ENCODE measurements at regions of chr17 and their contacts with region 1.

Region 1: DNA sequence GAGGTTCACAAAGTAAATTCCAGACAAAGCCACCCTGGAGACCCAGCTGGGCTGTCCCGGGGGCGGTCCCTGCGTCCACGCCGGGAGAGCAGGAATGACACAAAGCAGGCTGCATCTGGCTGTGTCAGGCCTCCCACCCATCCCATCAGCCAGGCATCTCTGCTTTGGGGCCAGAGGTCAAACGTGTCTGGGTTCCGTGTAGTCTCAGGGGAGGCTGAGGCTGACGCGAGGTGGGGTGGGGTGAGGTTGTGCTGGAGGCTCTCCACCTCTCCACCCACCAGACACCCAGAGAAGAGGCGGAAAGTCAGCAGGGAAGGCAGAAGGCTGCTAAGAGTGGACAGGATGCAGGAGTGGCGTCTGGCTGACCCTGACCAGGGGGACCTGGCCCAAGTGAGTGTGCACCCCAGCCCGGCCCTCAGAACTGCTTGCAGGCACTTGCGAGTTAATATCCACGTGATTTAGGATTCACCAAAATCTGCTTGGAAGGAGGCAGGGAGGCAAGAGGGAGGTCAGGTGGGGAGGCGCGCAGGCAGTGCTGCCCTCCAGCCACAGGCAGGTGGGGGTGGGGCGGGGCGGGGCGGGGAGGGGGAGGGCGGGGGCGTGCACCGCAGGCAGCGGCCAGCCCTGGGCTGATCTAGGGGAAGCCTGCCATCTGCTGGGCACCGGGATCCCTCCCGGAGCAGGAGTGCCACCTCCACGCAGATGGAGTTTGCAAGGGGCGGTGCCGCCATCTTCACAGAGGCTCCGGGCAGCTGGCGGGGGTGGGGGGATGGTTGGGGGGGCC is 44.3 kb downstream of the TBC1D16 start:
- DNase-seq: peak; percentile 68
- ATAC-seq: peak; percentile 89
- H3K4me3 ChIP-seq: no peak overlapping the region
- H3K27ac ChIP-seq: peak overlapping the region; percentile 37; the same call in 1 of the 2 replicates
- H3K4me1 ChIP-seq: peaks cover 51 to 57% of the 10 kb centered on the region in 2 experiments
- H3K27me3 ChIP-seq: no peaks in the 10 kb centered on the region
- CTCF ChIP-seq: peak in 2 of 3 experiments; percentile 44 to 71; a peak in 5 of 6 replicates
- POLR2A ChIP-seq: no peak
- RAD21 ChIP-seq: peak; percentile 82

Region 2: GRCh38 chr17:79741751-79742588 is 249.4 kb before region 1 on chr17:
- CTCF ChIA-PET with region 1: interaction called, 10 read pairs
- POLR2A ChIA-PET with region 1: no interaction called
- RAD21 ChIA-PET with region 1: no interaction called
- intact Hi-C with region 1: loop called (anchors 1 kb)
- DNase-seq: peak; percentile 46
- ATAC-seq: peak; percentile 87
- H3K4me3 ChIP-seq: peak overlapping the region; percentile 24 to 38
- H3K27ac ChIP-seq: no peak overlapping the region
- H3K4me1 ChIP-seq: peaks cover 11 to 33% of the 10 kb centered on the region in 2 experiments; a peak in 3 of 4 replicates
- H3K27me3 ChIP-seq: 0 out of 2 replicates have a peak, but pooled peaks cover 3% of the 10 kb centered on the region
- CTCF ChIP-seq: peak; percentile 89 to 99 (median 99)
- POLR2A ChIP-seq: no peak
- RAD21 ChIP-seq: peak; percentile 84

Region 3: DNA sequence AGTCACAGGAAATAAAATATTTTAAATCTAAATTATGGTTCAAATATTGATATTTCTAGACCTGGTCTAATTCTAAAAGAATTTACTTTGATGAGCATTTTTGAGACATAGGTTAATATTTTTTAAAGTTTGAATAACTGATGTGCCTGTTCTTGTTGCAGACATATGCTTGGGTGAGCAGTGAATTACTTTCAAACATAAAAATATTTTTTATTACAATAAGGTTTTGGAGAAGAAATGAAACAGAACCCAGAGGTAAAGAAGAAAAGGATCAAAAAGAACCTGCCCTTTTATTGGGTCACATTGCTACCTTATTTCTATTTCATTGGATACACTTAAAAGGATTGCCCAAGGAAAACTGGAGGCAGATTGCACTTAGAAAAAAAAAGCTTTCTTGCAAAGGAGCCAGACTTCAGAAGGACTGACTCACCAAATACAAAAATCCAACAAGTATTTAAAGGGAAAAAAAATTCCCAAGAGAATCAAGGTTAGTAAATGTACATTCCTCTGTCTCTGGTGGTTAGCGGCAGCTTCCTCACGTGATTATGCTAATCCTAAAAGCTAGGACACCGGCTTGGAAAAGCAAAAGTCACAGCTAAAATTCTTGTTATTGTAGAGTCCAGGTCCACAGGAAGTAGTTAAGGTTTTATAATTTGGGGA is 242.0 kb before region 1 on chr17:
- CTCF ChIA-PET with region 1: interaction called, 8 read pairs
- POLR2A ChIA-PET with region 1: no interaction called
- RAD21 ChIA-PET with region 1: no interaction called
- intact Hi-C with region 1: loop called (anchors 1 kb)
- DNase-seq: no peak
- ATAC-seq: no peak
- H3K4me3 ChIP-seq: no peak overlapping the region
- H3K27ac ChIP-seq: no peak overlapping the region
- H3K4me1 ChIP-seq: peaks cover 11 to 32% of the 10 kb centered on the region in 2 experiments; a peak in 3 of 4 replicates
- H3K27me3 ChIP-seq: no peaks in the 10 kb centered on the region
- CTCF ChIP-seq: no peak
- POLR2A ChIP-seq: no peak
- RAD21 ChIP-seq: no peak

Region 4: GRCh38 chr17:79789534-79790353 is 201.6 kb before region 1 on chr17:
- CTCF ChIA-PET with region 1: interaction called, 8 read pairs
- POLR2A ChIA-PET with region 1: no interaction called
- RAD21 ChIA-PET with region 1: interaction called in 1 of 2 experiments, 3 read pairs
- intact Hi-C with region 1: loop called (anchors 1 kb)
- DNase-seq: no peak
- ATAC-seq: peak; percentile 80
- H3K4me3 ChIP-seq: no peak overlapping the region
- H3K27ac ChIP-seq: no peak overlapping the region; the same call in 1 of the 2 replicates
- H3K4me1 ChIP-seq: peaks cover 19 to 31% of the 10 kb centered on the region in 2 experiments
- H3K27me3 ChIP-seq: no peaks in the 10 kb centered on the region
- CTCF ChIP-seq: peak; percentile 89 to 95 (median 92)
- POLR2A ChIP-seq: no peak
- RAD21 ChIP-seq: peak; percentile 97; the same call in 1 of the 2 replicates

Region 5: DNA sequence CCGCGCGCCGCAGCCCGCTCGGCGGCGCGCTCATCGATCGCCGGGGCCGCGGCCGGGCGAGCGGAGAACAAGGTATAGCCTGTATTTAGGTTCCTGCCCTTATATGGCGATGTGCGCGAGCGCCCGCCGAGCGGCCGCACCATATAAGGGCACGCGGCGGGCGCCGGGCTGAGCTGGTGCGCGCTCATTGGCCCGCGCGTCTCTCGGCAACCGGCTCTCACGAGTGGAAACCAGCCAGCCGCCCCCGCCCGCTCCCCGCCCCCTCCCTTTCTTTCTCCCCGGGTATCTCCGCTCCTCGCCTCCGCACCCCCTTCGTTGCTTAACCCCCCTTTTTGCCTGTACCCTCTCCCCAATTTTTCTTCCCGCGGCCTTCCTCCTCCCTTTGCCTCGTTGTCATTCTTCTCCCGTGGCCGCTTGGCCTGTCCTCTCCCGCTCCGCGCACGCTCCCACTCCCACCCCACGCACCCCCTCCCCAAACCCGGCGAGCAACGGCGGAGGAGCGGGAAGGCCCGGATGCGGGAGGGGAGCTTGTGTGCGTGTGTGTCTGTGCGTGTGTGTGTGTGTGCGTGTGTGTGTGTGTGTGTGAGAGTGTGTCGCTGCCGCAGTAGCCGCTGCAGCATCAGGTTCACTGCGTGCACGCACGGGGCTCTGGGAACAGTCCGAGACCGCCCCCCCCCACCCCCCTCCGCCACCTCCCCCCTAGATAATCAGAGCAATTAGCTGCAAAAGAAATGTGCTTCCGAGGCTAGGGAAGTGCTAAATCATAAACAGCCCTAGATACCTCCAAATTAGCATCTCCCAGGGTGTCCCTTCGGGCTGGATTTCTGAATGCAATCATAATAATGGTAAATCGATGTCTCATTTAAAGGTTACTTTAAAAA is 181.0 kb before region 1 on chr17:
- CTCF ChIA-PET with region 1: interaction called, 6 read pairs
- POLR2A ChIA-PET with region 1: no interaction called
- RAD21 ChIA-PET with region 1: interaction called in 1 of 2 experiments, 3 read pairs
- intact Hi-C with region 1: loop called (anchors 2 kb)
- DNase-seq: peak; percentile 70
- ATAC-seq: peak; percentile 89
- H3K4me3 ChIP-seq: peak overlapping the region; percentile 28 to 53
- H3K27ac ChIP-seq: no peak overlapping the region
- H3K4me1 ChIP-seq: peaks cover 25 to 44% of the 10 kb centered on the region in 2 experiments
- H3K27me3 ChIP-seq: peaks cover 6% of the 10 kb centered on the region; the same call in 1 of the 2 replicates
- CTCF ChIP-seq: no peak
- POLR2A ChIP-seq: no peak
- RAD21 ChIP-seq: no peak

Region 6: DNA sequence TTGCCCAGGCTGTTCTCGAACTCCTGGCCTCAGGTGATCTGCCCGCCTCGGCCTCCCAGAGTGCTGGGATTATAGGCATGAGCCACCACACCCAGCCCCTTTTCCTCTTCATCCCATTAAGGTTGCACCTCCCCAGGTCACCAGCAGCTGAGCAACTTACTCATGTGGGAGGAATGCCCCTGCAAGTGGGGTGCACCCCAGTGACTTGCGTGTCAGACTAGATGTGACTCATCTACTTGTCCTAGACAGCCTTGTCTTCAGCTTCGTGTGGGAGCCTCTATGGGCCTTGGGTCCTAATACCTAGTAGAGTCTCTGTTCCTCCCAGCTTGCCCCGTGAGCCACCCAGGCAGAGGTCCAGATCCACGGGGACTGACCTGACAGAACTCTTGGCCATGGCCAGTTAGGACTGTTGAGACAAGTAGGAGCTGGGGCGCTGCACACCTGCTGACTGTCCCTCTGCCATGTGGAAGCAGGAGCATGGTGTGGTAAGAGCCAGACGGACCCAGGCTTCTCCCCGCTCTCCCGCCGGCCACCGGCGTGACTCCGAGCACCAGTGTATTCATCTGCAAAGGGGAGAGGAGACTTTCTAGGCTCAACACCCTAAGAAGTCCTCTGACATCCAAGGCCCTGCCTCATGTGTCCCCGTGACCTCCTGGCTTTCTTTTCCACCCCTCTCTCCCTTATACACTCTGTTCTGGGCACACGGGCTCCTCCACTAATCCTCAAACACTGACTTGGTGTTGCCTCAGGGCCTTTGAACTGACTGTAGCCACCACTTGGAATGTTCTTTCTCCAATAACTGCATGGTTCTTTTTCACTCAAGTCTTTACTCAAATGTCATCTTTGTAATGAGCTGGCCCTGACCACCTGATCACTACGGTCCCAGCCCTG is 140.5 kb before region 1 on chr17:
- CTCF ChIA-PET with region 1: no interaction called
- POLR2A ChIA-PET with region 1: interaction called, 3 read pairs
- RAD21 ChIA-PET with region 1: no interaction called
- intact Hi-C with region 1: loop called (anchors 5 kb)
- DNase-seq: peak; percentile 91
- ATAC-seq: peak; percentile 84
- H3K4me3 ChIP-seq: peak overlapping the region in 1 of 2 experiments; percentile 16; a peak in 2 of 4 replicates
- H3K27ac ChIP-seq: peak overlapping the region; percentile 69
- H3K4me1 ChIP-seq: peaks cover 41 to 47% of the 10 kb centered on the region in 2 experiments
- H3K27me3 ChIP-seq: no peaks in the 10 kb centered on the region
- CTCF ChIP-seq: no peak
- POLR2A ChIP-seq: no peak
- RAD21 ChIP-seq: no peak